ENCODE measurements at regions of chr14 and their contacts with region 1.

Region 1: GRCh38 chr14:50109342-50109741 is 7.0 kb downstream of the VCPKMT start:
- DNase-seq: no peak
- H3K4me3 Mint-ChIP-seq: no peak overlapping the region
- H3K27ac Mint-ChIP-seq: no peak overlapping the region
- H3K4me1 Mint-ChIP-seq: peaks cover 46% of the 10 kb centered on the region
- H3K27me3 Mint-ChIP-seq: no peaks in the 10 kb centered on the region

Region 2: GRCh38 chr14:49852301-49853157 is 256.8 kb before region 1 on chr14 and contains the start of gene NEMF:
- CTCF ChIA-PET with region 1: interaction called, 43 read pairs
- POLR2A ChIA-PET with region 1: interaction called, 4 read pairs
- intact Hi-C with region 1: loop called (anchors 1 kb)
- DNase-seq: peak; percentile 88
- H3K4me3 Mint-ChIP-seq: peak within 1 kb of the TSS; percentile 98
- H3K27ac Mint-ChIP-seq: peak within 1 kb of the TSS; percentile 95
- H3K4me1 Mint-ChIP-seq: peaks cover 39% of the 10 kb centered on the region
- H3K27me3 Mint-ChIP-seq: no peaks in the 10 kb centered on the region
- total RNA-seq, gene NEMF: 63.6 to 71.0 TPM

Region 3: GRCh38 chr14:49879683-49880204 is 229.6 kb before region 1 on chr14:
- CTCF ChIA-PET with region 1: interaction called, 12 read pairs
- POLR2A ChIA-PET with region 1: no interaction called
- intact Hi-C with region 1: no loop called
- DNase-seq: peak; percentile 87
- H3K4me3 Mint-ChIP-seq: peak overlapping the region; percentile 12
- H3K27ac Mint-ChIP-seq: peak overlapping the region; percentile 62
- H3K4me1 Mint-ChIP-seq: peaks cover 35% of the 10 kb centered on the region
- H3K27me3 Mint-ChIP-seq: no peaks in the 10 kb centered on the region

Region 4: DNA sequence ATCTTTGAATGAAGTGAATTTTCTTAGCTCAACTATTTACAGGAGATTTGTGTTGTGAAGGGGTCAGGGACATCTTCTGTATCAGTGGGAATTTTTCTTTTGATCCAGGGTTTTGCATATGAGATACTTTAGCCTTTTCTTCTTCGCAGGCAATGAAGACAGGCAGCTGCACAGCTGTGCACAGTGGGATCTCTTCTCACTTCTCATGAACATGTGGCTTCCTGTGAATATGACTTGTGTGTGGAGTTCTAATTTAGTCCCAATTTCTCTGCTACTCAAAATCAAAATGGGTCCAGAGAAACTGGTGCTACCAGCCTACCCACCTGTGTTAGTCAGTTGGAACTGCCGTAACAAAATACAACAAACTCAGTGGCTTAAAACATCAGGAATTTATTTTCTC is 178.6 kb before region 1 on chr14:
- CTCF ChIA-PET with region 1: no interaction called
- POLR2A ChIA-PET with region 1: no interaction called
- intact Hi-C with region 1: no loop called
- DNase-seq: no peak
- H3K4me3 Mint-ChIP-seq: peak overlapping the region; percentile 5
- H3K27ac Mint-ChIP-seq: no peak overlapping the region
- H3K4me1 Mint-ChIP-seq: peaks cover 7% of the 10 kb centered on the region
- H3K27me3 Mint-ChIP-seq: no peaks in the 10 kb centered on the region

Region 5: DNA sequence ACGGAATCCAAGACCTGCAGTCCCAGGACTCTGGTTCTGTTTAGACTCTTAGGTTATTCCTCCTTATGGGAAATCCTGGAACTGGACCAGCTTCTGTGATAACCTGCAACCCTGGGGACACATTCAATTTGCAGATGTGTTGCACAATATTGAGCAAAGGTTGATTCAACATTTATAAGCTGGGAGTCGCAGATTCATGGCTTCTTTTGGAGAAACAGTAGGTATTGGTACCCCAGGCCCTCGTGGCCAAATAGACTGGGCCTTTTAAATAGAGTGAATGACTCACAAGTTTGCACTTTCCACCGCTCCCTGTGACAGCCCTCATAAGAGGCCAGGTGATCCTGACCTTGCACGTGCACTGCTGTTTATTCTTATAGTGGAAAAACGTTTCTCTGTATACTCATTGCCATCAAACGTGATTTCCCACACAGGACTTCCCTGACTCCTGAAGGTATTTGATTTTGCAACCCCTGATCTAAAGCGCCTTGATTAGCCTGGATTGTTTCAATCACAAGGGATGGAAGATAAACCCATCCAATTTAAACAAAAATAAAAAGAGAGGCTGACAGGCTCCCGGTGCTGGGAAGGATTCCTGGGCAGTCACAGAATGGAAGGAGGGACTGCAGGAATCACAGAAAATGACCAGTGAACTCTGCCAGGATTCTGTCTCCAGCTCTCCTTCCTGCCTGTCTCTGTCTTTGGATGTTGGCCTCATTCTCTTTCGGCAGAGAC is 91.0 kb before region 1 on chr14:
- CTCF ChIA-PET with region 1: interaction called, 10 read pairs
- POLR2A ChIA-PET with region 1: no interaction called
- intact Hi-C with region 1: no loop called
- DNase-seq: no peak
- H3K4me3 Mint-ChIP-seq: no peak overlapping the region
- H3K27ac Mint-ChIP-seq: no peak overlapping the region
- H3K4me1 Mint-ChIP-seq: peaks cover 44% of the 10 kb centered on the region
- H3K27me3 Mint-ChIP-seq: no peaks in the 10 kb centered on the region

Region 6: DNA sequence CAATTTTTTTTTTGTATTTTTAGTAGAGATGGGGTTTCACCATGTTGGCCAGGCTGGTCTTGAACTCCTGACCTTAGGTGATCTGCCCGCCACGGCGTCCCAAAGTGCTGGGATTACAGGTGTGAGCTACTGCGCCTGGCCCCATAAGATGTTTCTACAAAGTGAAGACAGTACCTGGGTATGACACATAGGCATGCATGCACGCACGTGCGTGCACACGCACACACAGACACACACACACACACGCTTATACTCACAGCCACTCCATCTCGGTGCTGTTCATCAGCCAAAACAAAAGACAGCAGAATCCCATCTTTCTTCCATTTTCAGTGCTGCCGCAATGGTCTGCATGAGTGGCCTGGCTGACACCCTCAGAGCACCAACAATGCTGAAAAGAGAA is 56.8 kb before region 1 on chr14:
- CTCF ChIA-PET with region 1: interaction called, 10 read pairs
- POLR2A ChIA-PET with region 1: no interaction called
- intact Hi-C with region 1: no loop called
- DNase-seq: no peak
- H3K4me3 Mint-ChIP-seq: no peak overlapping the region
- H3K27ac Mint-ChIP-seq: no peak overlapping the region
- H3K4me1 Mint-ChIP-seq: peaks cover 6% of the 10 kb centered on the region
- H3K27me3 Mint-ChIP-seq: no peaks in the 10 kb centered on the region

Region 7: GRCh38 chr14:50060871-50061663 is 48.3 kb before region 1 on chr14:
- CTCF ChIA-PET with region 1: interaction called, 7 read pairs
- POLR2A ChIA-PET with region 1: interaction called, 9 read pairs
- intact Hi-C with region 1: loop called (anchors 1 kb)
- DNase-seq: peak; percentile 71
- H3K4me3 Mint-ChIP-seq: peak overlapping the region; percentile 96
- H3K27ac Mint-ChIP-seq: peak overlapping the region; percentile 99
- H3K4me1 Mint-ChIP-seq: peaks cover 73% of the 10 kb centered on the region
- H3K27me3 Mint-ChIP-seq: no peaks in the 10 kb centered on the region

Region 8: GRCh38 chr14:50095895-50096294 is 13.4 kb before region 1 on chr14:
- CTCF ChIA-PET with region 1: interaction called, 10 read pairs
- POLR2A ChIA-PET with region 1: no interaction called
- intact Hi-C with region 1: no loop called
- DNase-seq: no peak
- H3K4me3 Mint-ChIP-seq: peak overlapping the region; percentile 28
- H3K27ac Mint-ChIP-seq: peak overlapping the region; percentile 67
- H3K4me1 Mint-ChIP-seq: peaks cover 57% of the 10 kb centered on the region
- H3K27me3 Mint-ChIP-seq: no peaks in the 10 kb centered on the region

Region 9: GRCh38 chr14:50403419-50403818 is 294.1 kb after region 1 on chr14:
- CTCF ChIA-PET with region 1: no interaction called
- POLR2A ChIA-PET with region 1: no interaction called
- intact Hi-C with region 1: no loop called
- DNase-seq: no peak
- H3K4me3 Mint-ChIP-seq: no peak overlapping the region
- H3K27ac Mint-ChIP-seq: no peak overlapping the region
- H3K4me1 Mint-ChIP-seq: peaks cover 4% of the 10 kb centered on the region
- H3K27me3 Mint-ChIP-seq: no peaks in the 10 kb centered on the region

Measured in activated CD4-positive, alpha-beta memory T cell treated with anti-CD3 and anti-CD28 coated beads for 36 hours (primary cell).